CD8-positive, alpha-beta memory T cell (primary cell): ENCODE measurements at regions of chr19 and their contacts with region 1.

Region 1: GRCh38 chr19:23758187-23759074 is at the start of gene ZNF681:
- DNase-seq: peak; percentile 74 to 94 (median 87)
- H3K4me3 ChIP-seq: peak within 1 kb of the TSS; percentile 90
- H3K4me3 Mint-ChIP-seq: peak within 1 kb of the TSS; percentile 93 to 96 (median 95)
- H3K27ac ChIP-seq: peak within 1 kb of the TSS; percentile 88
- H3K27ac Mint-ChIP-seq: peak within 1 kb of the TSS; percentile 94 to 99 (median 98)
- H3K4me1 ChIP-seq: peaks cover 14% of the 10 kb centered on the region
- H3K4me1 Mint-ChIP-seq: peaks cover 34 to 49% (median 48%) of the 10 kb centered on the region in 3 donors
- H3K27me3 ChIP-seq: no peaks in the 10 kb centered on the region
- H3K27me3 Mint-ChIP-seq: no peaks in the 10 kb centered on the region
- total RNA-seq, gene ZNF681: 4.6 to 4.9 TPM

Region 2: DNA sequence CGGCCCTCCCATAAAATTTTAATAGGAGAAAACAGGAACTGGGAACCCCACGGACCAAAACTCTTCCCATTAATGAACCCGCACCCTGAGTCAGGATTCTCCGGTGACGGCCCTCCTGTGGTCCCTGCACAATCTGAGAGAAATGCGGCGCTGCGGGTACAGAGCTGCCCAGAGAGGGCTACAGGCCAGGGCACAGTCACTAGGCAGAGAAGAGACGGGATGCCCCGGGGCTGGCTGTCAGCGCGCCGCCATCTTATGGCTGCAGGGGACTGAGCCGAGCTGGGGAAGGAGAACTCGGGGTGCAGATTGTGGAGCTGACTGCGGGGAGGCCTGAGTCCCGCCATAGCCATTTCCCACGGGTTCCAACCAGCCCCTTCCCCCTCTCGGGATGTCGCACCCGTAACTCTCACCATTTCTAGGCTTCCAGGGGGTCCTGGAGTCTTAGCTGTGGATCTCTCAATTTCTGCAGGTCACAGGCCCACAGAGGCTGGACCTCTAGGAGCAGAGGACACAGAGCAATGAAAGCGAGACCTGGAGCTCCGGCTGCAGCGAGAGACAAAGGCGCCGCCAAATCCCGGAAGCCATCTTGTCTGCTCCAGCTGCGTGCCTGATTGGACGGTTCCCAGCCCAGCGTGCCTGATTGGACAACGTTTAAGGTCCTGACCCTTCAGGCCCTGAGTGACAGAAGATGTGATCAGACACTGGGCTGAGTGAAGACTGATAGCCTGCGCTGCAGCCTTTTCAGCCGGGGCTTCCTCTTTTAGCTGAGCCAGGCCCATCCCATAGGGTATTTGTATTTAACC is 71.6 kb before region 1 on chr19 and contains the start of gene ZNF675:
- CTCF ChIA-PET with region 1: interaction called, 7 read pairs
- POLR2A ChIA-PET with region 1: interaction called, 20 read pairs
- DNase-seq: peak; percentile 83 to 94 (median 86)
- H3K4me3 ChIP-seq: peak within 1 kb of the TSS; percentile 100
- H3K4me3 Mint-ChIP-seq: peak within 1 kb of the TSS; percentile 97 to 100 (median 99)
- H3K27ac ChIP-seq: peak within 1 kb of the TSS; percentile 91
- H3K27ac Mint-ChIP-seq: peak within 1 kb of the TSS; percentile 98 to 100 (median 99)
- H3K4me1 ChIP-seq: peaks cover 26% of the 10 kb centered on the region
- H3K4me1 Mint-ChIP-seq: peaks cover 44 to 62% (median 59%) of the 10 kb centered on the region in 3 donors
- H3K27me3 ChIP-seq: no peaks in the 10 kb centered on the region
- H3K27me3 Mint-ChIP-seq: peaks cover 0 to 3% of the 10 kb centered on the region in 2 donors
- total RNA-seq, gene ZNF675: 16.7 to 19.1 TPM

Region 3: DNA sequence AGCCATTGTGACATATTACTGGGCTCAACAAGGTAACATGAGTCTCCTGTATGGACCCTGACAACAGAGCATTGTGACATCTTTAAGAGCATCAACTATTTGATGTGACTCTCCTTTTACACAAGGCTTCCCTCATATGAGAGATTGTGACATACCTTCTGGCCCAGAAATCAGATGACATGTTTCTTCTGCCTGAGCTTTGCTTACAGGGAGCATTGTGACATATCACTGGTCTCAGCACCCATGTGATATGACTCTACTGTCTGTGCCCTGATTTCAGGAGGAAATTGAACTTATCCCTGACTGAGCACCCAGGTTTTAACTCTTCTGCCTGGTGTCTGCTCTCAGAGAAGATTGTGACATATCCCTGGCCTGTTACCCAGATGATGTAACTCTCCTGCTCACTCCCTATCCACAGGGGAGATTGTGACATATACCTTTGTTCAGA is 16.1 kb after region 1 on chr19:
- CTCF ChIA-PET with region 1: no interaction called
- POLR2A ChIA-PET with region 1: no interaction called
- DNase-seq: no peak
- H3K4me3 ChIP-seq: no peak overlapping the region
- H3K4me3 Mint-ChIP-seq: no peak overlapping the region
- H3K27ac ChIP-seq: no peak overlapping the region
- H3K27ac Mint-ChIP-seq: peak overlapping the region in 3 of 8 donors; percentile 13 to 55 (median 42)
- H3K4me1 ChIP-seq: peaks cover 6% of the 10 kb centered on the region
- H3K4me1 Mint-ChIP-seq: peaks cover 20 to 30% (median 30%) of the 10 kb centered on the region in 3 donors
- H3K27me3 ChIP-seq: no peaks in the 10 kb centered on the region
- H3K27me3 Mint-ChIP-seq: no peaks in the 10 kb centered on the region

Region 4: DNA sequence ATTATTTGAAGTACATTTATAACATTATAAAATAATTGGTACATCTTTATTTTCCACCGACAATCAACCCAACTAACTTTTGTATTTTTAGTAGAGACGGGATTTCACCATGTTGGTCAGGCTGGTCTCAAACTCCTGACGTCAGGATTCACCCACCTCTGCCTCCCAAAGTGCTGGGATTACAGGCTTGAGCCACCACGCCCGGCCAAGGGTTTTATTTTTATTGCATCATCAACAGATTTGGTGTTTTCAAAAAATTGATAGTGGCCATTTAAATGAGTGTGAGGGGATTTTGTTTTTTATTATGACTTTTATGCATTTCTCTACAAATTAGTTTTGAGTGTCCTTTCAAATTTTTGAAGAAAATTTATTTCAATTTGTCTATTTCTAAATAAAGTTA is 166.9 kb after region 1 on chr19:
- CTCF ChIA-PET with region 1: no interaction called
- POLR2A ChIA-PET with region 1: no interaction called
- DNase-seq: no peak
- H3K4me3 ChIP-seq: no peak overlapping the region
- H3K4me3 Mint-ChIP-seq: no peak overlapping the region
- H3K27ac ChIP-seq: no peak overlapping the region
- H3K27ac Mint-ChIP-seq: no peak overlapping the region
- H3K4me1 ChIP-seq: no peaks in the 10 kb centered on the region
- H3K4me1 Mint-ChIP-seq: peaks cover 0 to under 1% (median 0%) of the 10 kb centered on the region in 3 donors
- H3K27me3 ChIP-seq: no peaks in the 10 kb centered on the region
- H3K27me3 Mint-ChIP-seq: no peaks in the 10 kb centered on the region